CD14-positive monocyte (primary cell): ENCODE measurements at regions of chr1 and their contacts with region 1.

Region 1: DNA sequence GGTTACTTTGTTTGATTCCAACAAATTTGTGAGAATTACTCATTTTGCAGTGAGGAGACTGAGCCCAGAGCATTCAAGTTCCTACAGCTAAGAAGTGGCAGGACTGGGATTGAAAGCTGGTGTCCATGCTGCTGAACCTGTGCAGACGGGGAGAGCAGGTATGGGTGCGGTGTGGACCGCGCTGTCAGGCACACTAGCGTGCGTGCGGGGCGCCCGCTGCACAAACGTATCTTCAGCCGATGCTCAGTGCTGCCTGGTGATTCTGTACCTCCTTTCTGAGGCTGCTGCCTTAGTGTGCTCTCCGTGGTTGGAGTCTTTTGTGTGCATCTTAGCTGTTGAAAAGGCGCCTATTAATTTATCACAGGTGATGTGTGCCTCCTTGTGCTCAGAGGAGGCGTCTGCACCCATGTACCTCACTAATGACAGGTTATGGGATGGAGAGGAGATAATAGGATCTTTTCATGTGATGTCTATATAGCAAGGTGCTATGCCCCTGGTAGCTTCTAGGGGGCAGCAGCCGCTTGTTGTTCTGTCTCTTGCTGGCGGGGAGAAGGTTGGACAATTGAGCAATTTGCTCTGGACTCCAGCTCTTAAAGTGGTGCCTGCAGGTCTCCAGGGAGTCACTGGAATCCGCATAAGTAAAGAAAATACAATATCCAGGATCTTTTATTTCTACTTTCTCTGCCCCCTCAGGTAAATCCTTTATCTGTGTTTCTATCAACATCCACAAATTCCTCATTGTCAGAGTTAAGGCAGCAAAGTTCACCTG is 32.5 kb downstream of the PEX14 start:
- DNase-seq: peak; percentile 24 to 47 (median 43)
- H3K4me3 ChIP-seq: no peak overlapping the region
- H3K4me3 Mint-ChIP-seq: no peak overlapping the region
- H3K27ac ChIP-seq: no peak overlapping the region
- H3K27ac Mint-ChIP-seq: no peak overlapping the region
- H3K4me1 ChIP-seq: peaks cover 4 to 18% of the 10 kb centered on the region in 2 donors
- H3K4me1 Mint-ChIP-seq: peaks cover 27% of the 10 kb centered on the region
- H3K27me3 ChIP-seq: no peaks in the 10 kb centered on the region
- H3K27me3 Mint-ChIP-seq: no peaks in the 10 kb centered on the region
- CTCF ChIP-seq: peak; percentile 71

Region 2: GRCh38 chr1:10378081-10378841 is 129.0 kb before region 1 on chr1:
- intact Hi-C with region 1: no loop called
- DNase-seq: peak; percentile 82 to 90 (median 87)
- H3K4me3 ChIP-seq: peak overlapping the region in 1 of 3 experiments; percentile 15
- H3K4me3 Mint-ChIP-seq: peak overlapping the region in 1 of 2 donors; percentile 27
- H3K27ac ChIP-seq: peak overlapping the region; percentile 71 to 78
- H3K27ac Mint-ChIP-seq: peak overlapping the region; percentile 84 to 95 (median 93)
- H3K4me1 ChIP-seq: peaks cover 22 to 32% of the 10 kb centered on the region in 2 donors
- H3K4me1 Mint-ChIP-seq: peaks cover 36% of the 10 kb centered on the region
- H3K27me3 ChIP-seq: no peaks in the 10 kb centered on the region
- H3K27me3 Mint-ChIP-seq: peaks cover 0 to 2% (median 2%) of the 10 kb centered on the region in 3 donors
- CTCF ChIP-seq: no peak

Region 3: GRCh38 chr1:10867138-10867721 is 359.9 kb after region 1 on chr1:
- intact Hi-C with region 1: loop called (anchors 5 to 10 kb)
- DNase-seq: peak in 2 of 3 donors; percentile 2 to 25
- H3K4me3 ChIP-seq: no peak overlapping the region
- H3K4me3 Mint-ChIP-seq: peak overlapping the region in 1 of 2 donors; percentile 58
- H3K27ac ChIP-seq: no peak overlapping the region
- H3K27ac Mint-ChIP-seq: no peak overlapping the region
- H3K4me1 ChIP-seq: peaks cover 3 to 6% of the 10 kb centered on the region in 2 donors
- H3K4me1 Mint-ChIP-seq: peaks cover 8% of the 10 kb centered on the region
- H3K27me3 ChIP-seq: peaks cover 27 to 54% of the 10 kb centered on the region in 2 donors
- H3K27me3 Mint-ChIP-seq: peaks cover 48 to 63% (median 56%) of the 10 kb centered on the region in 3 donors
- CTCF ChIP-seq: peak; percentile 85

Region 4: DNA sequence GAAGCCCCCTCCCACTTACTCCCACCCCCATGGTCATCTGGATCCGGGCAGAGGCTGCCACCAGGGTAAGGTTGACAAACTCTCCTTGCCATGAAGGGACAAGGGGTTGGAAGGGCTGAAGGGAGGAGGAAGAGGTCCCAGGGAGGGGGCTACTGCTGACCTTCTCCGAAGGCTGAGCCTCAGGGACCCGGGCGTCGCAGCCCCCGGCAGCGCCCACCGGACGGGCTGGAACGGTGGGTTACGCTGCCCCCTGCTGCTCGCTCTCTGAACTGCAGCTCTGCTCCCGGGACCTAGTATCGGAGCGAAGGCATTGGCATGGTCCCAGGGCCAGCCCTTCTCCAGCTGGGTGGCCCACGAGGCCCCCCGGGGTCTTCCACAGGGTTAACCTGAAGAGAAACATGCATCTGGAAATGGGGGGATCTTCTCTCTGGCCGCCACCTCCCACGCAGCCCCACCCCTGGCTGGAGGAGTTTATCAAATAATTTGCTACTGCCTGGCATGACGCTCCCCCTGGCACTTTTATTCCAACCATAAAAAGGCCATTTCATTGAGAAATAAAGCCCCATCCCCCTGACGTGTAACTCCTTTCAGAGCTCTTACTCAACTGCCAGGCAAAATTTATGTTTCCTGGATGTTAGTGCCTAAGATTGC is 434.7 kb after region 1 on chr1:
- intact Hi-C with region 1: loop called in 1 of 2 experiments (anchors 10 kb)
- DNase-seq: peak in 2 of 3 donors; percentile 24 to 41
- H3K4me3 ChIP-seq: no peak overlapping the region
- H3K4me3 Mint-ChIP-seq: no peak overlapping the region
- H3K27ac ChIP-seq: no peak overlapping the region
- H3K27ac Mint-ChIP-seq: no peak overlapping the region
- H3K4me1 ChIP-seq: peaks cover 14 to 21% of the 10 kb centered on the region in 2 donors
- H3K4me1 Mint-ChIP-seq: peaks cover 28% of the 10 kb centered on the region
- H3K27me3 ChIP-seq: peaks cover 0 to 20% of the 10 kb centered on the region in 2 donors
- H3K27me3 Mint-ChIP-seq: peaks cover 20 to 33% (median 21%) of the 10 kb centered on the region in 3 donors
- CTCF ChIP-seq: peak; percentile 96